Calu3 (cell line): ENCODE measurements at regions of chr2 and their contacts with region 1.

Region 1: DNA sequence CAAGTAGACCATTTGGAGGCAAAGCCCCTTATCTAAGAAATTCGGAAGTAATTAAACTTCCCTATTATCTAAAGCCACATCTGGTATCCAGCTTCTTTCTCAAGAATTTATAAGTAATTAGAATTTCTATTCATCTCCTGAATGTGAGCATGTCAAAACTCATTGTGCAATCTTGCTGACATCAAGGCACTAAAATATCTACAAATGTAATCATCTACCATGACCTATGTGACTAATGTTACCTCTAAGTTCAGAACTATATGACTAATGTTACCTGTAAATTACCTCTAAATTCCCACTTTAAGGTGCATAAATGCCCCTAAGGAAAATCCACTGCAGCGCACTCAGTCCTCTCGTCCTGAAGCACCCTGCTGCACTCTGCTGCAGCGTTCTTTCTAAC is 773.0 kb downstream of the CPS1 start:
- DNase-seq: peak; percentile 27
- H3K4me3 Mint-ChIP-seq: peak overlapping the region; percentile 55
- H3K27ac Mint-ChIP-seq: peak overlapping the region; percentile 98
- H3K4me1 Mint-ChIP-seq: peaks cover 23% of the 10 kb centered on the region
- H3K27me3 Mint-ChIP-seq: no peaks in the 10 kb centered on the region
- CTCF ChIP-seq: no peak

Region 2: DNA sequence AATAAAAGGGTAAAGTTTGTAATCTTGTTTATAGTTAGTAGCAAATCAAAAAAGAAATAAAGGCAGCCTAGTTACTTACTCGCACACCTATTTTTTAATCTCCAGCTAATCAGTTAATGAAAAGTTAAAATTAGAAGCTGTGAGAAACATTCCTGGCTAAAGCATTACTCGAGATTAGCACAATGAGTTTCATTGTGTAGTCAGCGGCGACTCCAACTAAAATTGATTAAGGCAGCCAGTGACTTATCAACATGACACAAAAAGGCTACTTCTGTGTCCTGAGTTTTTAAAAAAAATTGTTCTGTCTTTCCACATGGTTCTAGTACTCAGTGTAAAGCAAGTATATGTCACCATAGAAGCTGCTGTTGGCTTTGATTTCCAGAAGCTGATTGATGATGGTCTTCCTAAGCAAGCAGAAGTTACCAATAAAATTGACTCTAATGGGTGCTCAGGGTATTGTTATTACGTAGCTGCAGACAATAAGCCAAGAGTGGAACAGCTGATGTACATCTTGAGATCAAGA is 613.8 kb before region 1 on chr2:
- CTCF ChIA-PET with region 1: no interaction called
- intact Hi-C with region 1: loop called (anchors 5 kb)
- DNase-seq: no peak
- H3K4me3 Mint-ChIP-seq: no peak overlapping the region
- H3K27ac Mint-ChIP-seq: no peak overlapping the region
- H3K4me1 Mint-ChIP-seq: peaks cover 20% of the 10 kb centered on the region
- H3K27me3 Mint-ChIP-seq: no peaks in the 10 kb centered on the region
- CTCF ChIP-seq: no peak

Region 3: DNA sequence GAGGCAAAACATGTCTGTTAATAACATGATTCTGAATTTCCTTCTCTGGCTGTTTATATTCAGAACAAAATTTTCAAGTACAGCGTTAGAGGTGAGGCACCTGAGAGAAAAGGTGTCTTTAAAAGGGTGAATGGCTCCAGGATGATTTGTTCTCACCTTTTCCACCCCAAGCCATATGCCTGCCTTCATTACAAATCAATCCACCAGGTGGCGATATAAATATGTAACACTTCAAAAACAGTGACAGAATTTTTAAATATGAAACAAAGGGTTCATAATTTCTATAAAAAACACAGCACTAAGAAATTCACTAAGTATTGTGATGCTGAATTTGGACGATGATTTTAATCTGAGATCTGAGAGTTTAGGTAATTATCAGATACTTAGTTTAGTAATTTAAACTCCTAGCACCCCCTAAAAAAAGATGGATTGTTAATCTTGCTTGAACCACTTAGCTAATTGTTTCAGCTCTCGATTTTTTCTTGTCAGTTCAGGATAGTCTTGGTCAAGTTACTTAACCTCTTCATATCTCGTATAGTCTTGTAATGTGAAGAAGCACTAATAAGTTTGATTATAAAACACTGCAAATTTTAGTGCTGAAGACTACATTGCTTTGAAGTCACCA is 244.3 kb before region 1 on chr2:
- CTCF ChIA-PET with region 1: no interaction called
- intact Hi-C with region 1: loop called (anchors 2 kb)
- DNase-seq: peak; percentile 62
- H3K4me3 Mint-ChIP-seq: no peak overlapping the region
- H3K27ac Mint-ChIP-seq: peak overlapping the region; percentile 56
- H3K4me1 Mint-ChIP-seq: peaks cover 22% of the 10 kb centered on the region
- H3K27me3 Mint-ChIP-seq: no peaks in the 10 kb centered on the region
- CTCF ChIP-seq: peak; percentile 54

Region 4: DNA sequence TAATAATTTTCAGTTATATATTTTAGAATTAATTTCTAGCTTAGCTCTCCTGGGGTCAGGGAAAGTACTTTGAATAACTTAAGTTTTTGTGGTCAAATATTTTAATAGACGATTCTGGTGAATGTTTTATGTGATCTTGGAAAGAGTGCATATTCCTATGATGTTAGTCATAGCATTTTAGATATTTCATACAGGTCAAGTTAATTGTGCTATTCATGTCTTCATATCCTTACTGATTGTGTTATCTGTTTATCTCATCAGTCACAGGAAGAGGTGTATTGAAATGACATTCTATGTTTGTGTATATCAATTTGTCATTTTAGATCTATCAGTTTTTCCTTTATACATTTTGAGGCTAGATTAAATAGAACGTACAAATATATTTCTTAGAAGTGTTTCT is 196.8 kb before region 1 on chr2:
- CTCF ChIA-PET with region 1: no interaction called
- intact Hi-C with region 1: loop called (anchors 2 kb)
- DNase-seq: no peak
- H3K4me3 Mint-ChIP-seq: no peak overlapping the region
- H3K27ac Mint-ChIP-seq: peak overlapping the region; percentile 86
- H3K4me1 Mint-ChIP-seq: peaks cover 48% of the 10 kb centered on the region
- H3K27me3 Mint-ChIP-seq: no peaks in the 10 kb centered on the region
- CTCF ChIP-seq: no peak

Region 5: GRCh38 chr2:211216221-211216620 is 113.2 kb before region 1 on chr2:
- CTCF ChIA-PET with region 1: no interaction called
- intact Hi-C with region 1: no loop called
- DNase-seq: peak; percentile 6
- H3K4me3 Mint-ChIP-seq: no peak overlapping the region
- H3K27ac Mint-ChIP-seq: no peak overlapping the region
- H3K4me1 Mint-ChIP-seq: no peaks in the 10 kb centered on the region
- H3K27me3 Mint-ChIP-seq: no peaks in the 10 kb centered on the region
- CTCF ChIP-seq: peak; percentile 25

Region 6: DNA sequence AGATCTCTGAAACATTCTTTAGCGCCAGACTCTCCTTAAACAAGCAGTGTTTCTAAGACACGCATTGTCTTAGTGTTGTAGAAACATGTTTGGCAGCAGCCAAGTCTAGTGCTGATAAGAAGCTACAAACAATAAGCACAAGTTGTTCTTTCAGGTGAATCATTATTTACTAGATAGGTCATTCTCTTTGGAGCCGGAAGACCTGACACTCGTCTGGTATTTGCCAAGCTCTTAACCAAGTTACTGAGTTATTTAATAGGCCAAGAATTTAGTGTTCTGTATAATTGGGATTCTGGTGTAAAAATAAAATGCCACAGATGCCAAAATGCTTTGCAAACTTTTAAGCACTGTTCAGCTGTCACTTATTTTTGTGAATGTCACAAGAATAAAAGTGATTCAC is 79.1 kb after region 1 on chr2:
- CTCF ChIA-PET with region 1: interaction called, 5 read pairs
- intact Hi-C with region 1: loop called (anchors 1 kb)
- DNase-seq: peak; percentile 43
- H3K4me3 Mint-ChIP-seq: peak overlapping the region; percentile 66
- H3K27ac Mint-ChIP-seq: peak overlapping the region; percentile 99
- H3K4me1 Mint-ChIP-seq: peaks cover 70% of the 10 kb centered on the region
- H3K27me3 Mint-ChIP-seq: no peaks in the 10 kb centered on the region
- CTCF ChIP-seq: no peak

Region 7: GRCh38 chr2:211846716-211847115 is 517.3 kb after region 1 on chr2:
- CTCF ChIA-PET with region 1: no interaction called
- intact Hi-C with region 1: no loop called
- DNase-seq: no peak
- H3K4me3 Mint-ChIP-seq: no peak overlapping the region
- H3K27ac Mint-ChIP-seq: no peak overlapping the region
- H3K4me1 Mint-ChIP-seq: no peaks in the 10 kb centered on the region
- H3K27me3 Mint-ChIP-seq: no peaks in the 10 kb centered on the region
- CTCF ChIP-seq: no peak

Region 8: DNA sequence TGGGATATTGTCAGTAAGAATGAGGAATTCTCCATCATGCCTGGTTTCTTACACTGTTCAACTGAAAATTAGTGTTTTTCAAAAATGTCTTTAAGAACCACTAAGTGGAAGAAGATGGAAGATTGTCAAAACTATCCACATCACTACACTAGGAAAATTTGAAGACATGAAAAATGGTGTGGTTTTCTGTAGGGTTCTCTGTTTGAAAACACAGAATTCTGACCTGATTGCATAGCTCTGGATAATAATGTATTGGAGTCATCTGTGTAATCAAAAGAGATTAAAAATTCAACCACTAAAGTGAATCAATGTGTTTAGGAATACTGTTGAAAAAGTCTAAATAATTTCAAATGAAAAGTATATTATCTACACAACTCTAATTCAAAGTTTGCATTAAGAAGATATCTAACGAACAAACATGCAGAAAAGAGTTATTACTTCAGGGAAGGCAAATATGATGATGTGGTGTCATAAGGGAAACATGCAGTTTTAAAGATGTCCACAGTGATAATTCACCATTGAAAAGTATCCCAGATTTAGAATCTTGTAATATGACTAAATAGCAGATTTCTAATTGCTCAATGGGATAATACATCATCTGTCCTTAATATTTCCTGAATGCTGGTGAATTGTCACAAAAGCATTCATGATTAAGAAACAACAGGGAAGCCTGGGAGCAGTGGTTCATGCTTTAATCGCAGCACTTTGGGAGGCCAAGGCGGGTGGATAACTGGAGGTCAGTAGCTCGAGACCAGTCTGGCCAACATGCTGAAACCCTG is 1092.3 kb after region 1 on chr2:
- CTCF ChIA-PET with region 1: no interaction called
- intact Hi-C with region 1: loop called (anchors 5 kb)
- DNase-seq: no peak
- H3K4me3 Mint-ChIP-seq: no peak overlapping the region
- H3K27ac Mint-ChIP-seq: no peak overlapping the region
- H3K4me1 Mint-ChIP-seq: no peaks in the 10 kb centered on the region
- H3K27me3 Mint-ChIP-seq: no peaks in the 10 kb centered on the region
- CTCF ChIP-seq: no peak